Vagina (tissue), 2 donors: ENCODE measurements at regions of chr5 and their contacts with region 1.

Region 1: DNA sequence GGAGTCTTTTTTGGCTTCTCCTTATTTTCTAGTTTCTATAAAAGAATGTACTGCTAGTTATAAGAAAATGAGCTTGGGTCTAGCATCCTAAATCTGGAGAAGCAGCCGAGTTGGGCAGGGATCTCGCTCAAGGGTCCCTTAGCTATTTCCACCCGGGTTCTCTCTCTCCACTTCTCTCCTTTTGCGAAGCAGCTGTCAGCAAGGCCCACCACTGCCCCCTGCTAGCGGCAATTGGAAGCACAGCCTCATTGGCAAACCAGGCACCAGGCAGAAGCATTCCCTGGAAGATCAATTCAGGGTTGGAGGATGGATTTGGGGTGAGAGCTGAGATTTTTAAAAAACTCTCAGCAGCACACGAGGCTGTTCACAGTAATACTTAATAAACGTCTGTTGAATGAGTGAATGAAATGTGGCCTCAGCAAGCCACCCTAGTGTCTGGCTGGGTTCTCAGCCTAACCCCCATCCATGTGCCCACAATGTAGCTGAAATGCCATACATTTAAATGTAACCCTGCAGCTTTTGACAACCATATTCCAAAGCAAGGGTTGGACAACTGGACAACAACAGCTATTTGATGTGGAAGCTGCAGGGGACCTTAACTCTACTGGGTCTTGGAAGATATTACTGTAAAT is 34.6 kb upstream of the TNIP1 start:
- DNase-seq: no peak
- H3K4me3 ChIP-seq: no peak overlapping the region
- H3K27ac ChIP-seq: peak overlapping the region; percentile 43
- H3K4me1 ChIP-seq: no peaks in the 10 kb centered on the region
- H3K27me3 ChIP-seq: no peaks in the 10 kb centered on the region
- CTCF ChIP-seq: peak; percentile 88 to 97 (median 91)
- POLR2A ChIP-seq: no peak

Region 2: GRCh38 chr5:151023651-151024050 is 91.7 kb before region 1 on chr5:
- intact Hi-C with region 1: no loop called
- DNase-seq: no peak
- H3K4me3 ChIP-seq: peak overlapping the region; percentile 77 to 86
- H3K27ac ChIP-seq: peak overlapping the region; percentile 94
- H3K4me1 ChIP-seq: peaks cover 82% of the 10 kb centered on the region
- H3K27me3 ChIP-seq: no peaks in the 10 kb centered on the region
- CTCF ChIP-seq: no peak
- POLR2A ChIP-seq: no peak

Region 3: DNA sequence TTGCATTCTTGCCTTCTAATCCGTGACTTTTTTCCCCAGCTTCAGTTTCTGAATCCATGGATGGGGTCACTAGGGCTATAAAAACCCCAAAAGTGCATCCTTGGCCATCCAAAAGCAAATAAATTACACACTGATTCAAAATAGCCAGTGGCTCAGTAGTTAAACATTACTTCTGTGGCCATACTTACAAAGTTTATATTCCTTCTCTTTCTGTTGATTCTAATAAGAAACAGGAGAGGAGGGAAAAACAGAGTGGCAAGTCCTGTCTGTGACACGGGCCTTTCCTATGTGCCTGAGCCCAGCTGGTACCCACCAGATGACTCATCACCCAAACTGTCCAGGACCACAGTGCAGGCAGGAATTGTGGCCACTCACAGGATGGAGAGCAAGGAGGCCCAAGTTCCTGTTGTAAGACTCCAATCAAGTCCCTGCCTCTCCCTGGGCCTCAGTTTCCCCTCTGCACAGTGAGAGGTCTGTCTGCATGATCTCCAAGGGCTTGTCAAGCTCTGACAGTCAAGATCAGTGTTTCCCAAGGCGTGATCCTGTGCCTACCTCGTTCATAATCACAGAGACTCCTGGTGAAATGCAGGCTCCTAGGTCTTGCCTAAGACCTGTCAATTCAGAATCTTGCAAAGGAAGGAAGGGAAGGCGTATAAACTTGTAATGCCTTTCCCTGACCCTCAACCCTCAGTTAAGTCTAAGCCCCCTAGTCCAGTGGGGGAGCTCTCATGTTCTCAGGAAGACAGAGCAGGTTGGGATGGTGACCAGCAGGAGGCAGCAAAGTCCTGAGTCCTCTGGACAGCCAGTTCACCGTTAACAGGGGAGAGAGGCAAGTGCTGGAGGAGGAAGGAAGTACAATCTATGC is 64.1 kb before region 1 on chr5:
- intact Hi-C with region 1: loop called (anchors 5 kb)
- DNase-seq: no peak
- H3K4me3 ChIP-seq: no peak overlapping the region
- H3K27ac ChIP-seq: peak overlapping the region; percentile 41
- H3K4me1 ChIP-seq: peaks cover 13% of the 10 kb centered on the region
- H3K27me3 ChIP-seq: no peaks in the 10 kb centered on the region
- CTCF ChIP-seq: peak; percentile 75 to 93 (median 79)
- POLR2A ChIP-seq: no peak

Region 4: DNA sequence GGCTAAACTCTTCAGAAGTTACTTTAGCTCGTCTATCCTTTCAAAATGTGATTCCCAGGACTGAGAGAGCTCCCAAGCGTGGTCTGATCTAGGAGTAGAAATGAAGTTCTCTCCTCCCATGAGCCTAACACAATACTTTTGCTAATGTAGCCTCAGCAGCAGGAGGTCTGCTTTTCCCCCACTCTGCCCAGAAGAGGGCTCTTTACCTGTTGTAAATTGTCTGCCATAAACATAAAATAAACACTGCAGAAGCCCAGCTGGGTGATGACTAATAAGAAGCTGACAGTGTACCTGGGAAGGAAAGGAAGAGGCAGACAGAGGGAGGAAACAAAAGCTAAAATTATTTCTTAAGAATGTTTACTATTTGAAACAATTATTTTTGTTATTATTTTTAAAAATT is 172.8 kb after region 1 on chr5:
- intact Hi-C with region 1: no loop called
- DNase-seq: no peak
- H3K4me3 ChIP-seq: no peak overlapping the region
- H3K27ac ChIP-seq: no peak overlapping the region
- H3K4me1 ChIP-seq: no peaks in the 10 kb centered on the region
- H3K27me3 ChIP-seq: no peaks in the 10 kb centered on the region
- CTCF ChIP-seq: no peak
- POLR2A ChIP-seq: no peak